ENCODE measurements at regions of chr21 and their contacts with region 1.

Region 1: GRCh38 chr21:33011462-33011861 is 14.3 kb upstream of the OLIG2 start:
- DNase-seq: no peak
- H3K4me3 ChIP-seq: no peak overlapping the region
- H3K27ac ChIP-seq: no peak overlapping the region
- H3K4me1 ChIP-seq: no peaks in the 10 kb centered on the region
- H3K27me3 ChIP-seq: no peaks in the 10 kb centered on the region
- CTCF ChIP-seq: no peak
- EP300 ChIP-seq: no peak
- POLR2A ChIP-seq: no peak

Region 2: DNA sequence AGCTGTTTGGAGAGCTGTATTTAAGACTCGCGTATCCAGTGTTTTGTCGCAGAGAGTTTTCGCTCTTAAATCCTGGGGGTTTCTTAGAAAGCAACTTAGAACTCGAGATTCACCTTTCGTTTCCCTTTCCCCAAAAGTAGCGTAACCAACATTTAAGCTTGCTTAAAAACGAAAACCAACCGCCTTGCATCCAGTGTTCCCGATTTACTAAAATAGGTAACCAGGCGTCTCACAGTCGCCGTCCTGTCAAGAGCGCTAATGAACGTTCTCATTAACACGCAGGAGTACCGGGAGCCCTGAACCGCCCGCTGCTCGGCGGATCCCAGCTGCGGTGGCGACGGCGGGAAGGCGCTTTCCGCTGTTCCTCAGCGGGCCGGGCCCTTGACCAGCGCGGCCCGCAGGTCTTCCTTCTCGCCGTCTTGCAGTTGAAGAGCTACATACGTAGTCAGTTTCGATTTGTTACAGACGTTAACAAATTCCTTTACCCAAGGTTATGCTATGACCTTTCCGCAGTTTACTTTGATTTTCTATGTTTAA is 60.4 kb after region 1 on chr21:
- intact Hi-C with region 1: loop called in 1 of 4 experiments (anchors 2 kb)
- DNase-seq: no peak
- H3K4me3 ChIP-seq: peak overlapping the region; percentile 20
- H3K27ac ChIP-seq: no peak overlapping the region
- H3K4me1 ChIP-seq: no peaks in the 10 kb centered on the region
- H3K27me3 ChIP-seq: no peaks in the 10 kb centered on the region
- CTCF ChIP-seq: no peak
- EP300 ChIP-seq: no peak
- POLR2A ChIP-seq: no peak

Measured in ovary (tissue), 10 donors.